Heart left ventricle (tissue), 16 donors: ENCODE measurements at regions of chr1 and their contacts with region 1.

Region 1: DNA sequence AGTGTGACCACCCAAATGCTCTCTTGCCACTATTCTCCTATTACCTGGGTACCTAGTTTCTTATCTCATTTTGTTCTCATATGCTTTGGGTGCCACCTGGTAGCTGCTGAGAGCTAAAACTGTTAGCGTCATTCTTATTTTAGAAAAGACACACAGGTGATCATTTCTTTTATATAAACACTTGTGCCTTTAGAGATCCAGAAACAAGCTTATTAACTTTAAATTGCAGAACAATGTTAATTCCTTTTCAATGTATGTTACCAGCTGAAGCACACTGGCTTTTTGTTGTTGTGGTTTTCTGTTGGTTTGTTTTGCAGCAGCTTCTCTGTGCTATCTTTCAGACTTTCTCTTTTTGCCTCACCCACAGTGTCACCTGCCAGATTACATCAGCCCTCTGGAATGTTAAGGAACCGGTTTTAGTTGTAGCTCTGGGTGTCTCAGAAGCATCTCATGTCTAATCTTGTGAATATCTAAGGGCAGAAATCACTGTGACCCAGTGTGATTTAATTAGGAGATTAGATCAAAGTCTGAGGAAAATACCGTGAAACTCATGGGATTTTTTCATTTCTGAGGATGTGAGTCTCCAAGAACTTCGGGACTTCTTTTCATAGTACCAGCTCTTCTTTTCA is 43.4 kb upstream of the SLC19A2 start:
- DNase-seq: no peak
- ATAC-seq: no peak
- H3K4me3 ChIP-seq: no peak overlapping the region
- H3K27ac ChIP-seq: no peak overlapping the region
- H3K4me1 ChIP-seq: peaks cover 0 to 9% (median 0%) of the 10 kb centered on the region in 12 donors
- H3K27me3 ChIP-seq: no peaks in the 10 kb centered on the region
- CTCF ChIP-seq: no peak
- POLR2A ChIP-seq: no peak

Region 2: DNA sequence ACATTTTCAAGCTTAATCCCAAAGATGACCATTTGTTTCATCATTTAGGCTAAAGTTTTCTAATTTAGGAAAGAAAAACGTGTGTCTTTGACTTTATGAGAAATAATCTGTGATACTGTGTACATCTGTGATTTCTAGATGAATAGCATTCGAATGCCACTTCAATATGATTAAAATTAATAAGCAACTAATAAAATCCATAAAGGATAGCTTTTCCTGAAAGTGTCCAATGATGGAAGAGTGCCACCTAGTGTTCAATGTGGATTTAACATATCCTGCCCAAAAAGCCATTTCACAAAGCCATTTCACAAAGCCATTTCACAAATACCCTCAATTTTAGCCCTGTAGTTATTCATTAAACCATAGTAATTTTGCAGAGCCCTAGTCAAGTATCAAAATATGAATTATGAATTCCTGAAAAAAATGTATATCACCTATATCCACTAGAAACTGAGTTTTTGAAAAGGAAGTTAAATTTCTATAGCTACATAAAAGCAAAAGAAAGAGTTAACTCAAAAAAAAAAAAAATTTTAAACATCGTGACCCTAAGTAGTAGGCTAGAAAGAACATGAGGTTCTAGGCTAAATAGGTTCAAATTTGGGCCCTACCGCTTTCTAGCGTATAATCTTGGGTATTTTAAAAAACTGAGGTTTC is 180.7 kb before region 1 on chr1:
- intact Hi-C with region 1: no loop called
- DNase-seq: peak in 1 of 5 donors; percentile 11
- ATAC-seq: peak in 2 of 4 donors; percentile 34 to 42
- H3K4me3 ChIP-seq: no peak overlapping the region
- H3K27ac ChIP-seq: no peak overlapping the region
- H3K4me1 ChIP-seq: no peaks in the 10 kb centered on the region
- H3K27me3 ChIP-seq: no peaks in the 10 kb centered on the region
- CTCF ChIP-seq: peak; percentile 73 to 88 (median 82)
- POLR2A ChIP-seq: no peak

Region 3: GRCh38 chr1:169390303-169390702 is 138.9 kb before region 1 on chr1:
- intact Hi-C with region 1: loop called in 1 of 10 experiments (anchors 10 kb)
- DNase-seq: no peak
- ATAC-seq: no peak
- H3K4me3 ChIP-seq: no peak overlapping the region
- H3K27ac ChIP-seq: no peak overlapping the region
- H3K4me1 ChIP-seq: no peaks in the 10 kb centered on the region
- H3K27me3 ChIP-seq: no peaks in the 10 kb centered on the region
- CTCF ChIP-seq: no peak
- POLR2A ChIP-seq: no peak

Region 4: DNA sequence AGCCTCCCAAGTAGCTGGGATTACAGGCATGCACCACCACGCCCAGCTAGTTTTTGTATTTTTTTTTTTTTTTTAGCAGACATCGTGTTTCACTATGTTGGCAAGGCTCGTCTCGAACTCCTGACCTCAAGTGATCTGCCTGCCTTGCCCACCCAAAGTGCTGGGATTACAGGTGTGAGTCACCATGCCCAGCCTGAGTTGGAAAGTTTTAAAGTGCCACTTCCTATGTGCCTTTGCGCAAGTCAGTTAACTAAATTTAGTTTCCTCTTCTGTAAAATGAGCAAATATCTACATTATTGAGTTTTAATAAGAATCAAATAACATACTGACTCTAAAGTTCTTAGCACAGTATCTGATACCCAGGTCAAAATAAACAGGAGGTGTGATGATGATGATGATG is 55.8 kb before region 1 on chr1:
- intact Hi-C with region 1: loop called in 1 of 10 experiments (anchors 5 kb)
- DNase-seq: no peak
- ATAC-seq: no peak
- H3K4me3 ChIP-seq: no peak overlapping the region
- H3K27ac ChIP-seq: no peak overlapping the region
- H3K4me1 ChIP-seq: peaks cover 0 to 12% (median 0%) of the 10 kb centered on the region in 12 donors
- H3K27me3 ChIP-seq: no peaks in the 10 kb centered on the region
- CTCF ChIP-seq: no peak
- POLR2A ChIP-seq: no peak

Region 5: DNA sequence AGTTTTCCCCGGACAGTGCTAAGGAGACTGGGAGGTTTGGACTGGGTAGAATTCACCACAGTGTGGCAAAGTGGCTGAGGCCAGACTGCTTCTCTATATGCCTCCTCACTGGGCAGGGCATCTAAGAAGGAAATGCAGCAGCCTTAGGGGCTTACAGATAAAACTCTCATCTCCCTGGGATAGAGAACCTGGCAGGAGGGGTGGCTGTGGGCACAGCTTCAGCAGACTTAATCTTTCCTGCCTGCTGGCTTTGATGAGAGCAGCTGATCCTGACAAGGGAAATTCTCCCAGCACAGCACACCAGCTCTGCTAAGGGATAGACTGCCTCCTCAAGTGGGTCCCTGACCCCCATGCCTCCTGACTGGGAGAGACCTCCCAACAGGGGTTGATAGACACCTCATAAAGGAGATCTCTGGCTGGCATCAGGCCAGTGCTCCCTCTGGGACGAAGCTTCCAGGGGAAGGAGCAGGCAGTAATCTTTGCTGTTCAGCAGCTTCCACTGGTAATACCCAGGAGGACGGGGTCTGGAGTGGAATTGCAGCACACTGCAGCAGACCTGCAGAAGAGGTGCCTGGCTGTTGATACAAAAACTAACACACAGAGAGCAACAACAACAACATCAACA is 520.1 kb after region 1 on chr1:
- intact Hi-C with region 1: no loop called
- DNase-seq: no peak
- ATAC-seq: no peak
- H3K4me3 ChIP-seq: no peak overlapping the region
- H3K27ac ChIP-seq: no peak overlapping the region
- H3K4me1 ChIP-seq: peaks cover 0 to 11% (median 3%) of the 10 kb centered on the region in 12 donors
- H3K27me3 ChIP-seq: no peaks in the 10 kb centered on the region
- CTCF ChIP-seq: no peak
- POLR2A ChIP-seq: no peak